CD8-positive, alpha-beta memory T cell (primary cell): ENCODE measurements at regions of chr2 and their contacts with region 1.

Region 1: GRCh38 chr2:224650815-224651439 is 65.2 kb downstream of the CCDC195 start:
- DNase-seq: peak in 2 of 5 donors; percentile 29 to 32
- H3K4me3 ChIP-seq: no peak overlapping the region
- H3K4me3 Mint-ChIP-seq: no peak overlapping the region
- H3K27ac ChIP-seq: no peak overlapping the region
- H3K27ac Mint-ChIP-seq: no peak overlapping the region
- H3K4me1 ChIP-seq: no peaks in the 10 kb centered on the region
- H3K4me1 Mint-ChIP-seq: peaks cover 4 to 7% (median 5%) of the 10 kb centered on the region in 3 donors
- H3K27me3 ChIP-seq: no peaks in the 10 kb centered on the region
- H3K27me3 Mint-ChIP-seq: peaks cover 0 to 9% of the 10 kb centered on the region in 2 donors

Region 2: GRCh38 chr2:224369028-224369632 is 281.8 kb before region 1 on chr2:
- CTCF ChIA-PET with region 1: interaction called, 12 read pairs
- POLR2A ChIA-PET with region 1: no interaction called
- DNase-seq: peak in 2 of 5 donors; percentile 12 to 19
- H3K4me3 ChIP-seq: no peak overlapping the region
- H3K4me3 Mint-ChIP-seq: no peak overlapping the region
- H3K27ac ChIP-seq: no peak overlapping the region
- H3K27ac Mint-ChIP-seq: no peak overlapping the region
- H3K4me1 ChIP-seq: no peaks in the 10 kb centered on the region
- H3K4me1 Mint-ChIP-seq: peaks cover 0 to 1% (median 0%) of the 10 kb centered on the region in 3 donors
- H3K27me3 ChIP-seq: no peaks in the 10 kb centered on the region
- H3K27me3 Mint-ChIP-seq: peaks cover 6 to 16% of the 10 kb centered on the region in 2 donors

Region 3: GRCh38 chr2:224816816-224817215 is 165.9 kb after region 1 on chr2:
- CTCF ChIA-PET with region 1: no interaction called
- POLR2A ChIA-PET with region 1: no interaction called
- DNase-seq: no peak
- H3K4me3 ChIP-seq: no peak overlapping the region
- H3K4me3 Mint-ChIP-seq: no peak overlapping the region
- H3K27ac ChIP-seq: no peak overlapping the region
- H3K27ac Mint-ChIP-seq: peak overlapping the region in 2 of 8 donors; percentile 4 to 37
- H3K4me1 ChIP-seq: no peaks in the 10 kb centered on the region
- H3K4me1 Mint-ChIP-seq: peaks cover 0 to 3% (median 0%) of the 10 kb centered on the region in 3 donors
- H3K27me3 ChIP-seq: no peaks in the 10 kb centered on the region
- H3K27me3 Mint-ChIP-seq: no peaks in the 10 kb centered on the region